Testis (tissue), 5 donors: ENCODE measurements at regions of chr17 and their contacts with region 1.

Region 1: GRCh38 chr17:77247048-77247541 is 106.3 kb downstream of the SEC14L1 start:
- DNase-seq: peak; percentile 87
- H3K4me3 ChIP-seq: peak overlapping the region; percentile 19 to 58
- H3K27ac ChIP-seq: no peak overlapping the region
- H3K4me1 ChIP-seq: peaks cover 5% of the 10 kb centered on the region
- H3K27me3 ChIP-seq: no peaks in the 10 kb centered on the region
- CTCF ChIP-seq: peak; percentile 97 to 98 (median 97)
- POLR2A ChIP-seq: no peak

Region 2: DNA sequence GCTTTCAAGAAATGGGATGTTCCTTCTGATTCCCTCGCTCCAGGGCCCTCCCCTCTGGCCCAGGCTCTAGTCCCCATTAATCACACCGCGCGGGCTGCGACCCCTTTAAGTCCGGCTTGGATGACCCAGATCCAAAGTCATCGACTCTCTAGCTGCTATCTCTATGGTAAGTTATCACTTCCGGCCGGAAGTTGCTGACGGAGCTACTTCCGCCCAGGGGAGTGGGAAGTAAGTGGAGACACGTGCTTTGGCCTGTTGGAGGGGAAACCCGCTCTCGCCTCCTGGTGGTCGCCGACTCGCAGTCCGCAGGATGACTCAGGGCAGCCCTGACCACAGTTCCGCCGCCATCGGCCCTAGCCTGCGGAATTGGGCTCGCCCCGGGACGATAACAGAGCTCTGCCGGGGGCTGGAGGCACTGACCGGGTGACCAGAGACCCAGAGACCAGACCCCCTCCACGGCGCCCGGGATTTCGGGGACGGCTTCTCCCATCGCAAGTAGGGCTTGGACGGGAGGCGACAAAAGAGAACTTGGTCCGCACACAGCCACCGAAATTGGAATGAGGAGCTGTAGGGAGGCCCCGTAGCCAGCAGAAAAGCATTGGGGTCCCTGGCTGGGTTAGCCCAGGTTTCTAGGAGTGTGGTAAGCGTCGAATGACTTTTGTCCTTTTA is 158.5 kb before region 1 on chr17:
- intact Hi-C with region 1: loop called (anchors 5 kb)
- DNase-seq: peak; percentile 96
- H3K4me3 ChIP-seq: peak overlapping the region; percentile 68 to 92
- H3K27ac ChIP-seq: peak overlapping the region; percentile 78 to 82
- H3K4me1 ChIP-seq: peaks cover 15% of the 10 kb centered on the region
- H3K27me3 ChIP-seq: no peaks in the 10 kb centered on the region
- CTCF ChIP-seq: peak; percentile 70 to 92 (median 83)
- POLR2A ChIP-seq: no peak

Region 3: DNA sequence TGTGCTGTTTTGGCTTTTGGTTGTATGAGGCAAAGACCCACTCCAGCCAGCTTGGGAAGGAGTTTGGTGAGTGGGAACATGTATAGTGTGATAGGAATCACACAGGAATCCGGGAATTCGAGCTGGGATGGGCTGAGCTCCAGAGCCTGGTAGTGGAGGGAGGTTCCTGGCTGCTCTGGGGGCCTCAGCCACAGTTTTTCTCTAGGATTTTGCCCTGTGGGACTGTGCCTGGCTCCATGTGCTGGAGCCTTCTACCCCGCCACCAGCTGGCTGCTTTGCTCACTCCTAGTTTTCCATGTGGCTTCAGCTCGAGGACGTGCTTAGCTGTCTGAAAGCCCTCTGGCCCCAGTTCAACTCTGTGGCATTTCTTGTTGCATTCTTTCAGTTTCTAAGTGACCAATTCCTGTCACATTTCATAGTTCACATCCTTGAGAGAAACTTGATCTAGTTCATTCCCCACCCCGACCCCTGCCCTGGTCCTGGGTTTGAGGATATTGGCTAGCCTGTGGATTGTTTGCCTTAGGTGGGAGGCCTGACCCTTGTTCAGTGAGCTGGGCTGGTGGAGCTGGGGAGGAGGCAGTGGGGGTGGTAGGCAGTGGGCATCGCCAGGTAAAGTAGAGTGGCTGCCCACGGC is 101.4 kb before region 1 on chr17:
- intact Hi-C with region 1: no loop called
- DNase-seq: peak; percentile 92
- H3K4me3 ChIP-seq: no peak overlapping the region
- H3K27ac ChIP-seq: peak overlapping the region; percentile 66 to 95
- H3K4me1 ChIP-seq: peaks cover 55% of the 10 kb centered on the region
- H3K27me3 ChIP-seq: no peaks in the 10 kb centered on the region
- CTCF ChIP-seq: no peak
- POLR2A ChIP-seq: no peak

Region 4: GRCh38 chr17:77391668-77392375 is 144.7 kb after region 1 on chr17:
- intact Hi-C with region 1: no loop called
- DNase-seq: peak; percentile 77
- H3K4me3 ChIP-seq: no peak overlapping the region
- H3K27ac ChIP-seq: peak overlapping the region; percentile 73 to 82
- H3K4me1 ChIP-seq: peaks cover 77% of the 10 kb centered on the region
- H3K27me3 ChIP-seq: no peaks in the 10 kb centered on the region
- CTCF ChIP-seq: no peak
- POLR2A ChIP-seq: no peak

Region 5: DNA sequence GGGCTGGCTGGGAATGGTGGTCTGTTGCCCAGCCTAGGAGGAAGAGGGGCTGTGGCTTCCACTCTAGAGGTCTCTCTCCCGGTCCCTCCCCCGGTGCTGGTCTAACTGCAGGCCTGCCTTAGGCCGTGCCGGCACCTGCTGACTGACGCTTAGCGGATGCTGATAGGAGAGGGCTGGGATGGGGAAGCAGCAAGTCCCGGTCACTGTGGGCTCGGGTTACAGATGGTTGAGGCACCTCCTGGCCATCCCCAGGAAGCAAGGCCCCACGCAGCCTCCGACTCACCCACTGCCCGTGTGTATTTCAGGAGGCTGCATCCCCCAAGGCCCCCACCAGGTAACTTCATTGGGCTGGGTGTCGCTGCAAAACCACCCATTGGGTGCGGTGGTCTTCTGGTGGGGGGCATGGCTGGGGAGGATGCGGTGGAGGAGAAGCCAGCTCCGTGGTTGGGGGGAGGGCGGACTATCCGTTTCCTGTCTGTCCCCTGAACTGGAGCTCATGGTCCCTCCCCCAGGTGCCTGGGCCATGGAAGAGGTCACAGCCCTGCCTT is 172.5 kb after region 1 on chr17:
- intact Hi-C with region 1: no loop called
- DNase-seq: no peak
- H3K4me3 ChIP-seq: no peak overlapping the region
- H3K27ac ChIP-seq: no peak overlapping the region
- H3K4me1 ChIP-seq: peaks cover 42% of the 10 kb centered on the region
- H3K27me3 ChIP-seq: no peaks in the 10 kb centered on the region
- CTCF ChIP-seq: no peak
- POLR2A ChIP-seq: no peak